ENCODE measurements at regions of chr20 and their contacts with region 1.

Region 1: GRCh38 chr20:56925082-56925830 is 296.1 kb downstream of the TFAP2C start:
- DNase-seq: no peak
- H3K4me3 Mint-ChIP-seq: no peak overlapping the region
- H3K27ac Mint-ChIP-seq: no peak overlapping the region
- H3K4me1 Mint-ChIP-seq: peaks cover 6% of the 10 kb centered on the region
- H3K27me3 Mint-ChIP-seq: peaks cover 65% of the 10 kb centered on the region

Region 2: GRCh38 chr20:56629670-56630478 is 295.4 kb before region 1 on chr20:
- CTCF ChIA-PET with region 1: no interaction called
- intact Hi-C with region 1: loop called (anchors 5 kb)
- DNase-seq: no peak
- H3K4me3 Mint-ChIP-seq: no peak overlapping the region
- H3K27ac Mint-ChIP-seq: no peak overlapping the region
- H3K4me1 Mint-ChIP-seq: peaks cover 27% of the 10 kb centered on the region
- H3K27me3 Mint-ChIP-seq: peaks cover 69% of the 10 kb centered on the region